MCF 10A (cell line): ENCODE measurements at regions of chr6 and their contacts with region 1.

Region 1: DNA sequence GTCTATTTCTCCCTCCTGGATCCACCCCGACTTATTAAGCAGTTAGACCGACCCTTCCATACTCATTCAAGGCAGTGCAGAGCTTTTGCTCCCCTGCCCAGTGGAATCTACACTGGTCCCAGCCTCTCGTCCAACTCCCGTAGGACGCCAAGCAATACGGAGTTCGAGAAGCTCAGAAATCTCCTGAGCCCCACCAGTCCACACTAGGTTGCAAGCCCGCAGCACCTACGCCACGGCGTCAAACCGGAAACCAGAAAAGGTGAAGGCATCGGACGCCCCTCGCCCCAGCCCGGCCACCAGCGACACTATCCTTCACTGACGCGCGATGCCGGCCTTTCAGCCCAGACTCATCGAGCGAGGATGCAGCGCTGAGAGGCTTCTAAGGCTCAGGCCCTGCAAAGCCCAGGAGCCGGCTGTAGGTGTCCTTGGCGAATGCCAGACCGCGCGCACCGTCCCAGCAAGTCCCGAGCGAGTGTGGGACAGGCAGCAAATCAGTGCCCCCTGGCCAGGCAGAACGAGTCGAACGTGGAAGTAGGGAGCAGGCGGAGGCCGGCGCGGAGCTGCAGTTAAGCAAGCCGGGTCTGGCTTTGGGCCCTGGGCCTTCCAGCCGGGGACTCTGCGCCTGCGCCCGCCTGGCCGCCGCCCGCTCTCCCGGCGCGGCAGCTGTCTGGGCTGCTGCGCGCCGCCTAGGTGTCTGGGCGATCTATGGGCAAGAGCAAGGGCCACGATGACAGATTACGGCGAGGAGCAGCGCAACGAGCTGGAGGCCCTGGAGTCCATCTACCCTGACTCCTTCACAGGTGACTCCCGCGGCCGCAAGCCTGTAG is at the start of gene RWDD1:
- DNase-seq: peak; percentile 98
- H3K4me3 Mint-ChIP-seq: peak within 1 kb of the TSS; percentile 98
- H3K27ac Mint-ChIP-seq: peak within 1 kb of the TSS; percentile 98
- H3K4me1 Mint-ChIP-seq: peaks cover 25% of the 10 kb centered on the region
- H3K27me3 Mint-ChIP-seq: no peaks in the 10 kb centered on the region
- CTCF ChIP-seq: no peak
- total RNA-seq, gene RWDD1: 41.6 and 57.2 TPM in 2 replicates

Region 2: DNA sequence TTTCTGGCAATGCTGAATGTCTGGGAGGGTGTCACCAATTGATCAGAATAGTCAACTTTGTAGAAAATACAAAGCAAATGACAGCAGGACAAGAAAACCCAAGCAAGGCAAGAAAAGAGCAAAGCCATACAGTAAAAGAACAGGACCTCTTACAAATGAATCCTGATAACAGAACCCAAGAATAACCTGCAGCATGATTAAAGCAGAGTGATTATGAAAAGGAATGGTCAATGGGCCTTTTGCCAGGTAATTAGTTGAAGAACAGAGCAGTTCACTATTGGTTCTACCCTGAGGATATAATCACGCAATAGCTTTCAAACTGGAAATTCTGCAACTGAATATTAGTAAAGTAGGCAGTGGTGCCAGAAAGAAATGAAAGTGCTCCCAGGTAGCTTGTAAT is 830.2 kb before region 1 on chr6:
- CTCF ChIA-PET with region 1: no interaction called
- POLR2A ChIA-PET with region 1: no interaction called
- intact Hi-C with region 1: no loop called
- DNase-seq: peak; percentile 13
- H3K4me3 Mint-ChIP-seq: no peak overlapping the region
- H3K27ac Mint-ChIP-seq: no peak overlapping the region
- H3K4me1 Mint-ChIP-seq: no peaks in the 10 kb centered on the region
- H3K27me3 Mint-ChIP-seq: peaks cover 21% of the 10 kb centered on the region
- CTCF ChIP-seq: no peak

Region 3: GRCh38 chr6:115891111-115891669 is 679.9 kb before region 1 on chr6:
- CTCF ChIA-PET with region 1: no interaction called
- POLR2A ChIA-PET with region 1: no interaction called
- intact Hi-C with region 1: no loop called
- DNase-seq: peak; percentile 51
- H3K4me3 Mint-ChIP-seq: no peak overlapping the region
- H3K27ac Mint-ChIP-seq: no peak overlapping the region
- H3K4me1 Mint-ChIP-seq: peaks cover 9% of the 10 kb centered on the region
- H3K27me3 Mint-ChIP-seq: peaks cover 44% of the 10 kb centered on the region
- CTCF ChIP-seq: no peak

Region 4: DNA sequence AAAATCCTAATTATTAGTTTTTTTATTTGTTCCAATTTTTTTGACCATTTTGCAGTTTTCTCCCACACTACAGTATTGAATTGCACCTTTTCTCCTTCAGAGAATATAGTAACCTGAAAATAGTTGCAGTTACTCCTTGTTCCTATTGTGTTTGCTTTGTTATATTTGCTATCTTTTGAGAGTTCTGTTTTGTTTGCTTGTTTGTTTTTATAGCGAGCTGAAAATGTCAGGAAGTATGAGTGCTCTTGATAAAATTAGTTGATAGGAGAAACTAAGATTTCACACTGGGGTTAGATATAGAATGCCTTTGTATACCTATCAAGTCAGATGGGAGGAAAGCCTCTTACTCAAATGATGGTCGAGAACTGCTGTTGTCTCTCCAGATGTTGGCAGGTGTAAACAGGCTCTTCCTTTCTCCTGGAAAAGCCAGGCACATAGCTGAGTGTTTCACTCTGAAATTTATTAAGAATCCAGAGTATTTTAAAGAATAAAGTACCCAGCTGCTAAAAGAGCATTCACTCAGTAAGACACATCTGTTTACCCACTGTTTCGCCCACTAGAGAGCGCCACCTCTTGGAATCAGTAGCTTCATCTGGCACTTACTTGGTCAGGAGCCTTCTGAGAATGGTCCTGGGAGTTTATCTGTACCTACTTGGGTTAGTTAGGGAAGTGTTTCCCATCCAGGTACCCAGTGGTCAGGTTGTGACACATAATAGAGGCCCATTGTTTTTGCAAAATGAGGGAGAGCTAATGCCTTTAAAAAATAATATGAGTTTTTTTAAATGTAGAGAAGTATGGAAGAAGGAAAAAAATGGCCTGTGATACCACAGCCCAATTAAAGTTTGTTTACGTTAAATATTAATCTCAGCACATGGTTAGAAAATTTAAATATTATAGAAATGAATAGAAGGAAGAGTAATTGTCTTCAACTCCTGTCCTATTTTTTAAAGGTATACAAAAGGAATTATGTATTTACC is 459.2 kb before region 1 on chr6:
- CTCF ChIA-PET with region 1: interaction called, 4 read pairs
- POLR2A ChIA-PET with region 1: no interaction called
- intact Hi-C with region 1: loop called (anchors 10 kb)
- DNase-seq: peak; percentile 63
- H3K4me3 Mint-ChIP-seq: no peak overlapping the region
- H3K27ac Mint-ChIP-seq: no peak overlapping the region
- H3K4me1 Mint-ChIP-seq: no peaks in the 10 kb centered on the region
- H3K27me3 Mint-ChIP-seq: no peaks in the 10 kb centered on the region
- CTCF ChIP-seq: peak; percentile 48

Region 5: GRCh38 chr6:116190550-116190949 is 380.5 kb before region 1 on chr6:
- CTCF ChIA-PET with region 1: no interaction called
- POLR2A ChIA-PET with region 1: no interaction called
- intact Hi-C with region 1: no loop called
- DNase-seq: no peak
- H3K4me3 Mint-ChIP-seq: no peak overlapping the region
- H3K27ac Mint-ChIP-seq: no peak overlapping the region
- H3K4me1 Mint-ChIP-seq: no peaks in the 10 kb centered on the region
- H3K27me3 Mint-ChIP-seq: no peaks in the 10 kb centered on the region
- CTCF ChIP-seq: no peak

Region 6: GRCh38 chr6:116253505-116254296 is 317.4 kb before region 1 on chr6 and contains the start of gene TSPYL4:
- CTCF ChIA-PET with region 1: interaction called, 3 read pairs
- POLR2A ChIA-PET with region 1: interaction called, 27 read pairs
- intact Hi-C with region 1: no loop called
- DNase-seq: peak; percentile 96
- H3K4me3 Mint-ChIP-seq: no peak within 1 kb of the TSS
- H3K27ac Mint-ChIP-seq: no peak within 1 kb of the TSS
- H3K4me1 Mint-ChIP-seq: peaks cover 22% of the 10 kb centered on the region
- H3K27me3 Mint-ChIP-seq: no peaks in the 10 kb centered on the region
- CTCF ChIP-seq: no peak
- total RNA-seq, gene TSPYL4: 9.1 and 9.8 TPM in 2 replicates

Region 7: GRCh38 chr6:116615937-116616736 is 45.1 kb after region 1 on chr6 and contains the start of gene RSPH4A:
- CTCF ChIA-PET with region 1: interaction called, 3 read pairs
- POLR2A ChIA-PET with region 1: interaction called, 17 read pairs
- intact Hi-C with region 1: no loop called
- DNase-seq: peak; percentile 84
- H3K4me3 Mint-ChIP-seq: peak within 1 kb of the TSS; percentile 78
- H3K27ac Mint-ChIP-seq: peak within 1 kb of the TSS; percentile 22
- H3K4me1 Mint-ChIP-seq: peaks cover 5% of the 10 kb centered on the region
- H3K27me3 Mint-ChIP-seq: peaks cover 22% of the 10 kb centered on the region
- CTCF ChIP-seq: no peak
- total RNA-seq, gene RSPH4A: not detected in 2 replicates

Region 8: GRCh38 chr6:116667623-116668022 is 96.6 kb after region 1 on chr6:
- CTCF ChIA-PET with region 1: interaction called, 3 read pairs
- POLR2A ChIA-PET with region 1: interaction called, 59 read pairs
- intact Hi-C with region 1: no loop called
- DNase-seq: peak; percentile 5
- H3K4me3 Mint-ChIP-seq: peak overlapping the region; percentile 93
- H3K27ac Mint-ChIP-seq: peak overlapping the region; percentile 96
- H3K4me1 Mint-ChIP-seq: peaks cover 33% of the 10 kb centered on the region
- H3K27me3 Mint-ChIP-seq: no peaks in the 10 kb centered on the region
- CTCF ChIP-seq: no peak

Region 9: GRCh38 chr6:116680975-116681808 is 110.1 kb after region 1 on chr6 and contains the start of gene KPNA5:
- CTCF ChIA-PET with region 1: interaction called, 3 read pairs
- POLR2A ChIA-PET with region 1: interaction called, 11 read pairs
- intact Hi-C with region 1: no loop called
- DNase-seq: peak; percentile 89
- H3K4me3 Mint-ChIP-seq: peak within 1 kb of the TSS; percentile 96
- H3K27ac Mint-ChIP-seq: peak within 1 kb of the TSS; percentile 94
- H3K4me1 Mint-ChIP-seq: peaks cover 11% of the 10 kb centered on the region
- H3K27me3 Mint-ChIP-seq: no peaks in the 10 kb centered on the region
- CTCF ChIP-seq: no peak
- total RNA-seq, gene KPNA5: 6.0 and 7.3 TPM in 2 replicates

Region 10: GRCh38 chr6:116726947-116727346 is 155.9 kb after region 1 on chr6:
- CTCF ChIA-PET with region 1: no interaction called
- POLR2A ChIA-PET with region 1: no interaction called
- intact Hi-C with region 1: no loop called
- DNase-seq: no peak
- H3K4me3 Mint-ChIP-seq: no peak overlapping the region
- H3K27ac Mint-ChIP-seq: no peak overlapping the region
- H3K4me1 Mint-ChIP-seq: no peaks in the 10 kb centered on the region
- H3K27me3 Mint-ChIP-seq: no peaks in the 10 kb centered on the region
- CTCF ChIP-seq: no peak